PC-3 (cell line): ENCODE measurements at regions of chr3 and their contacts with region 1.

Region 1: GRCh38 chr3:183664913-183665381 is 29.5 kb downstream of the KLHL24 start:
- DNase-seq: peak; percentile 97
- ATAC-seq: peak; percentile 94
- H3K4me3 ChIP-seq: no peak overlapping the region
- H3K27ac ChIP-seq: peak overlapping the region; percentile 52
- H3K4me1 ChIP-seq: peaks cover 10% of the 10 kb centered on the region
- H3K27me3 ChIP-seq: no peaks in the 10 kb centered on the region
- CTCF ChIP-seq: no peak

Region 2: DNA sequence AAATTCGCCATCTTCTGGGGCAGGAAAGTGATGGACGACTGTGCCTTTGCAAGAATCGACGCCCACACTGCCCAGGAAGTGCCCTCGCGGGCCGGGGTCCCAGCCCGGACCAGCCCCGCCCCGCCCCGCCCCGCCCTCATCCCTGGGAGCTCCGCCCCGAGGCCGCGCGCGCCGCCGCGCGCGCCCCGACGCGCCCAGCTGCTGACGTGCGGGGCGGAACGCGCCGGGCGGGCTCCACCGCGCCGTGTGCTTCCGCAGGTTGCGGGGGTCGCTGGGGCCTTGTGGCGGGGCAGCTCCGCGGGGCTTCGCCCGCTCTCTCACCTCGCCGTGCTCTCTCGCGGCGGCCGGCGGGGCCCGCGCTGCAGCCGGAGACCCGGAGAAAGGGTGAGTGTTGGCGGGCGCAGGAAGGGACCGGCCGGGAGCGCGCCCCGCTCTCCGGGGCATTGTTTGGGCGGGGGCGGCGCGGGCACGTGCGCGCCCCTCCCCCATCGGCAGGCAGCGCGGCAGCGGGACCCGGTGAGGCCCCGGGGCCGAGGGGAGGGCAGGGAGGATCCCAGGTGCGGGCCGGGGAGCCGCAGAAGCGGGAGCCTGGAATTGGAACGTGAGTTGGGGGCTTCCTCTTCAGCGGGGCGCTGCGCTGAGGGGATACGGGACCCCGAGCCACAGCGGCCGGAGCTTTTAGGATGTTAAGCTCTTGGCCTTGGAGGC is 32.8 kb after region 1 on chr3 and contains the start of gene YEATS2:
- CTCF ChIA-PET with region 1: interaction called, 3 read pairs
- POLR2A ChIA-PET with region 1: interaction called, 11 read pairs
- intact Hi-C with region 1: no loop called
- DNase-seq: peak; percentile 73
- ATAC-seq: peak; percentile 79
- H3K4me3 ChIP-seq: peak within 1 kb of the TSS; percentile 99
- H3K27ac ChIP-seq: peak within 1 kb of the TSS; percentile 5; the same call in 1 of the 2 replicates
- H3K4me1 ChIP-seq: peaks cover 15% of the 10 kb centered on the region
- H3K27me3 ChIP-seq: no peaks in the 10 kb centered on the region
- CTCF ChIP-seq: no peak
- total RNA-seq, gene YEATS2: 30.4 and 31.0 TPM in 2 replicates